Heart left ventricle (tissue), 16 donors: ENCODE measurements at regions of chr10 and their contacts with region 1.

Region 1: GRCh38 chr10:77173615-77174461 is 463.8 kb downstream of the KCNMA1 start:
- DNase-seq: peak; percentile 48 to 60 (median 59)
- ATAC-seq: peak in 3 of 4 donors; percentile 69 to 79 (median 77)
- H3K4me3 ChIP-seq: no peak overlapping the region
- H3K27ac ChIP-seq: peak overlapping the region in 1 of 12 donors; percentile 74
- H3K4me1 ChIP-seq: no peaks in the 10 kb centered on the region
- H3K27me3 ChIP-seq: peaks cover 0 to 25% (median 0%) of the 10 kb centered on the region in 9 donors
- CTCF ChIP-seq: peak; percentile 74 to 95 (median 86)
- POLR2A ChIP-seq: no peak

Region 2: DNA sequence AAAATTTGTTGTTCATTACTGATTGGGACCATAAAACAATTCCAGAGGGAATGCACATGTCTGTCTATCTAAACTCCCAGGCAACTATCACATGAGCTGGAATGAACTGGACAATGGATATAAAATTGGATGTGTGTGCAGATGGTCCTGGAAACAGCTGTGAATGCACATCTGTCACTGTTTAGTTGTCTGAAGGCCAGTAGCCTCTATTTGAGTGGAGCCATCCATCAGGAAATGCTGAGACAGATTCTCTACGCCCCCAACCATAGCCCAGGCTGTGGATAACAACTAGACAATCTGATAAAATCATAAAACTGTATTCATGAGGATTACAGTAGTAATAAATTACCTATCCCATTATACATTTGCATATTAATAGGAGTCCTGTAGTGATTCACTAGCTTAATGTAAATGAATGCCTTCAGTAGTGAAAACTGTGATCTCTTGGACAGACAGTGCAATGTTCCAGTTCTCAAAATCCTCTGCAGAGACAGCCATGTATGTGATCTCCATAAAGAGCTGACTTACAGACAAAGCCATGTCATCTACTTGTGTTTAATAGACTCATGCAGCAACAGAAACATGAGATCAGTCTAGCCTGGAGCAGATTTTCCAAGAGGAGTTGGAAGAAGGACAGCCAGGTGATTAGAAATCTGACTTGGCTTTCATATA is 443.9 kb before region 1 on chr10:
- intact Hi-C with region 1: no loop called
- DNase-seq: no peak
- ATAC-seq: no peak
- H3K4me3 ChIP-seq: no peak overlapping the region
- H3K27ac ChIP-seq: no peak overlapping the region
- H3K4me1 ChIP-seq: no peaks in the 10 kb centered on the region
- H3K27me3 ChIP-seq: no peaks in the 10 kb centered on the region
- CTCF ChIP-seq: no peak
- POLR2A ChIP-seq: no peak

Region 3: DNA sequence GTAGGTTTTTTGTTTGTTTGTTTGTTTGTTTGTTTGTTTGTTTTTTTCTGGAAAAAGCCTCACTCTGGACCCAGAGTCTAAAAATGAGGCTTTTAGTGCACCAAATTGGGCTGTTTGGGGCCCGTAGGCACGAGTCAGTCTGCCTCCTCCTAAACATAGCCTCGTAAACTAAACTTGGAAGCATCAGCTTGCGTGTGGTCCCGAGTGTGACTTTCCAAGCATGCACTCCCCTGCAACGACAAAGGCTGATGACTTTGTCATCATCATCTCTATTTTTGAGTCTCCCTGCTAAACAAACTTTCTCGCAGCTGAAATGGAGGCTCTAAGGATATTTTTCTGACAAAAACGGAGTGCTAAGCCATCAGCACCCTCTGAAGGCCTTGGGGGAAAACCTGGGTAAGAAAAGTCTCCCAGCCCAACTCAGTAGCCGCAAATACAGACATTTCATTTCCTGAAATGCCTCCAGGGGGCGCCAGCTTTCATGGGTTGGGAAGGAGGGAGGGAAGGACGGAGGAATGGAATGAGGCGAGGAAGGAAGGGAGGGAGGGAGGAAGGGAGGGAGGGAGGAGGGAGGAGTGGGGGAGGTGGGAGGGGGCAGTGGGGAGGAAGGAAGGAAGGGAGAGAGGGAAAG is 217.9 kb after region 1 on chr10:
- intact Hi-C with region 1: loop called in 9 of 10 experiments (anchors 2 to 10 kb)
- DNase-seq: peak; percentile 54 to 75 (median 66)
- ATAC-seq: peak in 3 of 4 donors; percentile 62 to 81 (median 72)
- H3K4me3 ChIP-seq: no peak overlapping the region
- H3K27ac ChIP-seq: peak overlapping the region in 1 of 12 donors; percentile 70
- H3K4me1 ChIP-seq: peaks cover 0 to 24% (median 10%) of the 10 kb centered on the region in 12 donors
- H3K27me3 ChIP-seq: peaks cover 0 to 4% (median 0%) of the 10 kb centered on the region in 9 donors
- CTCF ChIP-seq: peak; percentile 31 to 64 (median 48)
- POLR2A ChIP-seq: no peak

Region 4: DNA sequence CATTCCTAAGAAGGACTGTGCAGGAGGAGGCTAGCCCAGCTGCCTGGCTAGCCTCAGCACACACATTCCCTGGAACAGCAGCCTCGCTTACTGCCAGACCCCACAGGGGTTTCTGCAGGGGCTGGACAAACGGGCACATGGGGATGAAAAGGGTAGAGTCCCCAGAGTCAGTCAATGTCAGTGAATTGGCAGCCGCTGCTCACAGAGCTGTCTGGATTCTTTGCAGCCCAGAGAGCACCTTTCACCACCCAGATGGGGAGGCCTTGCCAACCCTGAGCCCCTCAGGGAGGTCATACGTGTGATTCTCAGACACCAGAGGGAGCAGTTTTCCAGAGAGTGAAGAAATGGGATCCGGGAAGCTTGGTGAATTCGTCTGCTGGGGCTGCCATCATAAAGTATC is 320.5 kb after region 1 on chr10:
- intact Hi-C with region 1: loop called in 3 of 10 experiments (anchors 5 to 10 kb)
- DNase-seq: no peak
- ATAC-seq: no peak
- H3K4me3 ChIP-seq: no peak overlapping the region
- H3K27ac ChIP-seq: no peak overlapping the region
- H3K4me1 ChIP-seq: peaks cover 0 to 6% (median 0%) of the 10 kb centered on the region in 12 donors
- H3K27me3 ChIP-seq: no peaks in the 10 kb centered on the region
- CTCF ChIP-seq: peak in 8 of 12 donors; percentile 10 to 43 (median 18)
- POLR2A ChIP-seq: no peak

Region 5: GRCh38 chr10:77710759-77711682 is 537.2 kb after region 1 on chr10:
- intact Hi-C with region 1: loop called (anchors 2 to 10 kb)
- DNase-seq: peak; percentile 56 to 89 (median 70)
- ATAC-seq: peak; percentile 59 to 98 (median 94)
- H3K4me3 ChIP-seq: peak overlapping the region; percentile 5 to 54 (median 46)
- H3K27ac ChIP-seq: no peak overlapping the region
- H3K4me1 ChIP-seq: peaks cover 0 to 11% (median 5%) of the 10 kb centered on the region in 12 donors
- H3K27me3 ChIP-seq: peaks cover 0 to 49% (median 23%) of the 10 kb centered on the region in 9 donors
- CTCF ChIP-seq: peak; percentile 91 to 98 (median 95)
- POLR2A ChIP-seq: no peak